Left cardiac atrium (tissue), 4 donors: ENCODE measurements at regions of chr2 and their contacts with region 1.

Region 1: GRCh38 chr2:142682528-142682927 is 194.9 kb upstream of the KYNU start:
- DNase-seq: no peak
- ATAC-seq: no peak

Region 2: DNA sequence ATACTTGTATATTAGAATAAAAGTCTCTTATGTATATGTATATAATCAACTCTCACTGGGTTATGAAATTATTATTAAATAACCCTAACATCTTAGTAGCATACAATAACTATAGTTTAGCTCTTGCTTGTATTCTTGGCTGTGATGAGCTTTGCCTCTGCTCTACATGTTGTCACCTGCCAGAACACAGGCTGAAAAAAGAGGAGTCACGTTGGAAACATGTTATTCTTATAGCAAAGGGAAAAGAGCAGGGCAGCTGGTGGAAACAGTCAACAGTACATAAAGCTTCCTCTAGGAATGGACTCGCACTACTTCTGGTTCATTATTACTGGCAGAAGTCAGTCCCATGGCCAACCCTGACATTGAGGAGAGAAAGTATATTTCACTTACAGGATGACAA is 167.0 kb before region 1 on chr2:
- intact Hi-C with region 1: no loop called
- DNase-seq: no peak
- ATAC-seq: no peak

Region 3: DNA sequence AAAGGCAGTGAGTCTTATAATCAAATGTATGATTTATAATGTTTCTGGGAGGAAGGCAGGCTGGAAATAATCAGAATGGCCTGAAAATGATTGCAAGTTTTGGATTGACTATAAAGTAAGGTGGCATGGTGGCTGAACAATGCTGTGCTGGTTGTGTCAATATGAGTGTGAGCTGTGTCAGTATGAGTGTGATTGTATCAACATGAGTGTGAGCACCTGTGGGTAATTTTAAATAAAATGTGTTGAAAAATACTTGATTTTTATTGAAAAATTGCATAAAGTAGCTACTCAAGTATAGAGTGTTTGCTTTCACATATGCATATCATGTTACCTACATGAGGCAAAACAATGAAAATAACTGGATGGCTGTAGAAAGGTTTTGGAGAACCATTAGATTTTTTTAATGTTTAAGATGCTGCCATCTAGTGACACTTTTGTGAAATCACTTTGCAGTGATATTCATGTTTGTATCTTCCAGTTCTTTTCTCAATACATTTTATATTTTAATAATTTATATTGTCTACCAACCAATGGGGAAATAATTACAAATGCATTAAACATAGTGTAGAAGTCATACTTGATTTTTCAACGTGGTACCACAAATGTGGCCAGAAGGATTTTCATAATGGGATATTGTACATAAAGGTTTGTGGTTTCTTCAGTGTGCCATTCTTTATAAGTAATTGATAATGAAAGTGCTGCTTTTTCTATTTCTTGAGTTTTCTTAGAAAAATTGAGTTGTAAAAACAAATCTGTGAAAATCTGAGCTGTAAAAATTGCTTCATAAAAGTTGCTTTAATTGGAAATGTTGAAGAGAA is 298.2 kb after region 1 on chr2:
- intact Hi-C with region 1: loop called (anchors 5 to 10 kb)
- DNase-seq: no peak
- ATAC-seq: no peak

Region 4: DNA sequence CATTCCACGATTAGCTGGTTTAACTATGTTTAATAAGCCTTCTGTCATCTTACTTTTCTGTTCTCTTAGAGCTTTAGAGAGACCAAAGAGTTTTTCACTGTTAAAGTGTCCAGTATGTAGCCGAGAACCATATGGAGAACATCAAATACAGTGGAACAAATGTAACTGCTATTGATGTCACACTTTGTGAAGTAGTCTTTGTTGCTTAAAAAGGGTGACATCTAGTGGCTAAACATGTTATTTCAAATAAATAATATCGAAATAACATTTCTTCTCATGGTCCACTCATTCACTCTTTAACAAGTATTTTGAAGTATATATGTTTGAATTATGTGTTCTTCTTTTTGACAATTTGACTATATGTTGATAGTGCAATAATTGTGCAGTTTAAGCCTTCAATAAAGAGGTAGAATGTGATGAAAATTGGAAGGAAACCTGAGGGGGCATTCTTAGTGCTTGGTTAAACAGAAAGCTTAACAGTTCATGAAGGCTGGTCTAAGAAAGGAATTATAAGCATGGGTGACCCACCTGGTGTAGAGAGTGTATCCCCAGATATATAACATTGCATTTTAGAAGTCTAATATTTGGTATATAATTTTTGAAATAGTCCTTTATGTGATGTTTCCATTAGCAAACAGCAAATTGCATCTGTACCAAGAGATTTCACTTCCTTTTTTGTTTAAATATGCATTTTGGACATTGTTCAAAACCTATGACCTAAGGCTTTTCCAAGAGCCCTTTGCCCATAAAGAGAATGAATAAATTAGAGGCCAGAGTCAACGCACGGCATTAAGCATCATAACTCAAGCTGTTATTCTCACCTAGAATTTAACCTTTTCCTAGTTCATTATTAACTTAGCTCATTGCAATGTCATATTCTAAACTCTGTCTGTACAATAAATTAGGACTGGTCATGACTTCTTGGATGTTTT is 307.0 kb after region 1 on chr2:
- intact Hi-C with region 1: loop called (anchors 5 to 10 kb)
- DNase-seq: no peak
- ATAC-seq: no peak

Region 5: GRCh38 chr2:143209570-143210445 is 527.3 kb after region 1 on chr2:
- intact Hi-C with region 1: no loop called
- DNase-seq: no peak
- ATAC-seq: no peak